ENCODE measurements at regions of chr6 and their contacts with region 1.

Region 1: DNA sequence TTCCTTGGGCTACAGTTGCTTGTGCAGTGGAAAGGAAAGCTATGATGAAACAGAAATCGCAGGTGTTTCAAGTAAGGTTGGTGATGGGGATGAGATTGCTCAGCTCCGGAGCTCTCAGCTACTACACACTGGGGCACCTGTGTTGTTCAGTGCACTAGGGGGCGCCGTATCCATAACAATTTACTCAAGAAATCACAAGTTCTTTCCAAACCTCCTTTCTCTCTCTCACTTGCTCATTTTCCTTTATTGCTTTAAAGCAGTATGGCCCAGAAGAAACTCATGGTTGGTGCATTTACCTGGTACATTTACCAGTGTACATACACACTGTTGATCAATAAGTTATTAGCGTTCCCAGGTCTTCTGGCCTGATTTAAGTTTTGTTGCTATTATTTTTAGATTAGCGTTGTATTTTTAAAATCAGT is 235.2 kb upstream of the TAB2 start:
- DNase-seq: peak; percentile 97
- ATAC-seq: peak; percentile 86
- H3K4me3 Mint-ChIP-seq: no peak overlapping the region
- H3K27ac Mint-ChIP-seq: no peak overlapping the region
- H3K4me1 Mint-ChIP-seq: peaks cover 50% of the 10 kb centered on the region
- H3K27me3 Mint-ChIP-seq: no peaks in the 10 kb centered on the region
- CTCF ChIP-seq: peak; percentile 81

Region 2: DNA sequence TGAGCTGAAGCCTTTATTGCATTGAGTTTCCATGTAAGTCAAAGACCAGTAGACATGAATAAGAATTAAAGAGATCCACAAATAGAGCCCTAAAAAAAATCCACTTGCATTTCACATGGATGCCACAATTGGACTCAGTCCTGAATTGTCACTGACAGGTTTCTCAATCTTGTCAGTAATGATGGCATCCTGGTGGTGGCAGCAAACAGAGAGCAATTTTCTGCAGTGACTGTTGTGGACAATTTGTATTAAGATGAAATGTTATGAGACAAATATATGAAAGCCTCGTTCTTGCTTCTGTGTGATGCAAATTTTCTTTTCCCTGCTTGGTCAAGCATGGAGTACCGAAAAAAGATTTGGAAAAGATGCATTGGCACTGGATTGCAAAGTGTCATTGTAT is 1294.9 kb before region 1 on chr6:
- CTCF ChIA-PET with region 1: no interaction called
- POLR2A ChIA-PET with region 1: no interaction called
- intact Hi-C with region 1: no loop called
- DNase-seq: no peak
- ATAC-seq: no peak
- H3K4me3 Mint-ChIP-seq: no peak overlapping the region
- H3K27ac Mint-ChIP-seq: no peak overlapping the region
- H3K4me1 Mint-ChIP-seq: no peaks in the 10 kb centered on the region
- H3K27me3 Mint-ChIP-seq: no peaks in the 10 kb centered on the region
- CTCF ChIP-seq: no peak

Region 3: GRCh38 chr6:148677594-148678476 is 404.5 kb before region 1 on chr6:
- CTCF ChIA-PET with region 1: no interaction called
- POLR2A ChIA-PET with region 1: no interaction called
- intact Hi-C with region 1: no loop called
- DNase-seq: no peak
- ATAC-seq: no peak
- H3K4me3 Mint-ChIP-seq: no peak overlapping the region
- H3K27ac Mint-ChIP-seq: no peak overlapping the region
- H3K4me1 Mint-ChIP-seq: no peaks in the 10 kb centered on the region
- H3K27me3 Mint-ChIP-seq: peaks cover 5% of the 10 kb centered on the region
- CTCF ChIP-seq: no peak

Region 4: GRCh38 chr6:149020319-149020718 is 62.0 kb before region 1 on chr6:
- CTCF ChIA-PET with region 1: no interaction called
- POLR2A ChIA-PET with region 1: no interaction called
- intact Hi-C with region 1: no loop called
- DNase-seq: no peak
- ATAC-seq: no peak
- H3K4me3 Mint-ChIP-seq: no peak overlapping the region
- H3K27ac Mint-ChIP-seq: no peak overlapping the region
- H3K4me1 Mint-ChIP-seq: peaks cover 3% of the 10 kb centered on the region
- H3K27me3 Mint-ChIP-seq: no peaks in the 10 kb centered on the region
- CTCF ChIP-seq: no peak

Region 5: DNA sequence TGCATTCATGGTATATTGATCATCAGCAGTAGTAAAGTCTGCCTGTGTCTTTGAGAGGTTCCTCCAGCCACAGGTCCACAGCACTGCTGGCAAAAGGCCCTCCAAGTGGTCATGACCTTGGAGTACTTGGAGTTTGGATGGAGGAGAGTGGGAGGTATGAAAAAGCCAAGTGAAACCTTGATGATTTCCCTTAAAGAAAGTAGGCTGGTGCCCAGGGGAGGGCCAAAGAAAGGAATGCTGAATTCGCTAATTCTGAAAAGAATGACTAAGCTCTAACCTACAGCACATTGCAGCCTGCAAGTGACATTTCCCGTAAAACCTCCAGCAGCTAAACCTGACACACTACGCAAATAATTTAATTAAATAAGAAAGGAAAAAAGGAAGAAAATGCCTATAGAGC is 11.9 kb after region 1 on chr6:
- CTCF ChIA-PET with region 1: interaction called, 11 read pairs
- POLR2A ChIA-PET with region 1: interaction called, 6 read pairs
- intact Hi-C with region 1: no loop called
- DNase-seq: peak; percentile 23
- ATAC-seq: no peak
- H3K4me3 Mint-ChIP-seq: peak overlapping the region; percentile 62
- H3K27ac Mint-ChIP-seq: peak overlapping the region; percentile 96
- H3K4me1 Mint-ChIP-seq: peaks cover 50% of the 10 kb centered on the region
- H3K27me3 Mint-ChIP-seq: no peaks in the 10 kb centered on the region
- CTCF ChIP-seq: no peak